ENCODE measurements at regions of chr2 and their contacts with region 1.

Region 1: GRCh38 chr2:75403991-75404428 is 156.7 kb downstream of the EVA1A start:
- H3K4me3 Mint-ChIP-seq: no peak overlapping the region
- H3K27ac Mint-ChIP-seq: no peak overlapping the region
- H3K4me1 Mint-ChIP-seq: no peaks in the 10 kb centered on the region
- H3K27me3 Mint-ChIP-seq: peaks cover 11% of the 10 kb centered on the region

Region 2: DNA sequence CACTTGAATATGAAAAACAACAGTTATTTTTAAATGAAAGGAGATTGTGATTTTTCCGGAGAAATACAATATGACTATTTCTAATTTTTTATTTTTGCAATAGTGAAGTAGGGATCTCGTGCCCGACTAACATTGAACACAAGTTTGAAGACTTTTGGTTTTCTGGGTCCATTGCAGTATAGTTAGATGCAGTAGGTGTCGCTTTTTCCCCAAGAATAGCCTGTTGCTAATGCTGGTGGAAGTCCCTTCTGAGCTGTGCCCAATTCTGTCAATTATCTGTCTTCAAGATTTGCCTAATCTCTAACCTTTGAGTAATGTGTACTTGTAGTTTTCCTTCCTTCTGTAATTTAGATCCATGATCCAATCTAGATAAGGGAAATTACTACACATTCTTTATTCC is 713.4 kb before region 1 on chr2:
- intact Hi-C with region 1: loop called (anchors 5 kb)
- H3K4me3 Mint-ChIP-seq: no peak overlapping the region
- H3K27ac Mint-ChIP-seq: no peak overlapping the region
- H3K4me1 Mint-ChIP-seq: peaks cover 10% of the 10 kb centered on the region
- H3K27me3 Mint-ChIP-seq: peaks cover 8% of the 10 kb centered on the region

Region 3: DNA sequence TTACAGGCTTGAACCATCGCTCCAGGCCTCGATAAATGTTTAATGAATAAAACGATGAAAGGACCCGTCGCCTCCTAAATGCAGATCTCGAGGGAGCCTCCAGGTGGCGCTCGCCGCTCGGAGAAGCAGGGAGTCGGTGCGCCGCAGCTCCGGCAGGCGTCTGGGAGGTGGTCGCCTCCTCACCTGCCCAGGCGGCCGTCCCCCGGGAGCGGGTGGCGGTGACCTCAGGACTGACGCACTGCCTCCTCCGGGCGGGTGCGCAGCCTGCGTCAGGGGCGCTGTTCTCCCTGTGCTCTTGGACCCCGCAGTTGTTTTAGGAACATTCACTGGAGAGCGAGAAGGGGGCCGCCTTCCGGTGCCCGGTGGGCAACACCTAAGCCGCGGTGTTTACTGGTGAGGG is 484.2 kb before region 1 on chr2:
- intact Hi-C with region 1: loop called (anchors 1 kb)
- H3K4me3 Mint-ChIP-seq: peak overlapping the region; percentile 51
- H3K27ac Mint-ChIP-seq: no peak overlapping the region
- H3K4me1 Mint-ChIP-seq: peaks cover 43% of the 10 kb centered on the region
- H3K27me3 Mint-ChIP-seq: peaks cover 30% of the 10 kb centered on the region

Region 4: GRCh38 chr2:75064691-75065396 is 339.2 kb before region 1 on chr2:
- intact Hi-C with region 1: loop called (anchors 2 kb)
- H3K4me3 Mint-ChIP-seq: no peak overlapping the region
- H3K27ac Mint-ChIP-seq: no peak overlapping the region
- H3K4me1 Mint-ChIP-seq: no peaks in the 10 kb centered on the region
- H3K27me3 Mint-ChIP-seq: peaks cover 11% of the 10 kb centered on the region

Region 5: GRCh38 chr2:75157430-75157829 is 246.6 kb before region 1 on chr2:
- intact Hi-C with region 1: loop called (anchors 5 kb)
- H3K4me3 Mint-ChIP-seq: no peak overlapping the region
- H3K27ac Mint-ChIP-seq: no peak overlapping the region
- H3K4me1 Mint-ChIP-seq: peaks cover 6% of the 10 kb centered on the region
- H3K27me3 Mint-ChIP-seq: peaks cover 5% of the 10 kb centered on the region

Region 6: GRCh38 chr2:75199428-75200011 is 204.5 kb before region 1 on chr2 and contains the start of gene TACR1:
- intact Hi-C with region 1: loop called (anchors 5 kb)
- H3K4me3 Mint-ChIP-seq: peak within 1 kb of the TSS; percentile 7
- H3K27ac Mint-ChIP-seq: no peak within 1 kb of the TSS
- H3K4me1 Mint-ChIP-seq: peaks cover 8% of the 10 kb centered on the region
- H3K27me3 Mint-ChIP-seq: peaks cover 61% of the 10 kb centered on the region

Measured in dendritic cell treated with granulocyte-macrophage colony-stimulating factor and Interleukin-4, amounts not matched to agents 40 ng/mL and 50 ng/mL, for 4 days (primary cell).